Naive thymus-derived CD4-positive, alpha-beta T cell (primary cell): ENCODE measurements at regions of chr9 and their contacts with region 1.

Region 1: DNA sequence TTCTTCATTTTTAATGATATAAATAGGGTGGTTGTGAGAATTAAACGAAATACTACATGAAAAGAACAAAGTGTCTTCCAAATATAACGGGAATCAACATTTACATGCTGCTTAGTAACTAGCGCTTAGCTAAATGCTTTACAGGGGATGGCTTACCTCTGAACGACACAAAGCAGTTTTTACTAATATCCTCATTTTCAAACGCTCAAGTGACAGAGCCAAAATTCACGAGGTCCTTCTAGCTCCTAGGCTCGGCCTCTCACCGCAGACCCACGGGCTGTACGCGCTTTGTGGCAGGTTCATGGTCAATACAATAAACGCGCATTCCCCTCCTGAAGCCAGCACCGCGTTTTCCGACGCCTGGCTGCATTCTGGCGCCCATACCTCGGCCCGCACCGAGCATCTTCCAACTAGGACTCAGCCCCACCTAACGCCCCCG is 442 bp downstream of the ZNF510 start:
- DNase-seq: peak in 5 of 9 donors; percentile 18 to 47 (median 29)
- ATAC-seq: peak; percentile 28
- H3K4me3 ChIP-seq: peak overlapping the region; percentile 84
- H3K4me3 Mint-ChIP-seq: peak overlapping the region; percentile 91 to 100 (median 98)
- H3K27ac ChIP-seq: peak overlapping the region; percentile 92
- H3K27ac Mint-ChIP-seq: peak overlapping the region; percentile 94 to 100 (median 98)
- H3K4me1 ChIP-seq: peaks cover 6 to 12% of the 10 kb centered on the region in 2 donors
- H3K4me1 Mint-ChIP-seq: peaks cover 12 to 64% (median 58%) of the 10 kb centered on the region in 7 donors
- H3K27me3 ChIP-seq: no peaks in the 10 kb centered on the region
- H3K27me3 Mint-ChIP-seq: no peaks in the 10 kb centered on the region

Region 2: GRCh38 chr9:96686548-96687335 is 90.7 kb before region 1 on chr9:
- CTCF ChIA-PET with region 1: no interaction called
- POLR2A ChIA-PET with region 1: no interaction called
- intact Hi-C with region 1: loop called in 1 of 2 experiments (anchors 1 kb)
- DNase-seq: peak; percentile 54 to 81 (median 78)
- ATAC-seq: peak; percentile 96
- H3K4me3 ChIP-seq: peak overlapping the region; percentile 69
- H3K4me3 Mint-ChIP-seq: peak overlapping the region; percentile 73 to 95 (median 87)
- H3K27ac ChIP-seq: peak overlapping the region; percentile 67
- H3K27ac Mint-ChIP-seq: peak overlapping the region in 6 of 9 donors; percentile 42 to 81 (median 66)
- H3K4me1 ChIP-seq: no peaks in the 10 kb centered on the region
- H3K4me1 Mint-ChIP-seq: peaks cover 0 to 16% (median 7%) of the 10 kb centered on the region in 7 donors
- H3K27me3 ChIP-seq: no peaks in the 10 kb centered on the region
- H3K27me3 Mint-ChIP-seq: peaks cover 0 to 7% (median 6%) of the 10 kb centered on the region in 5 donors

Region 3: GRCh38 chr9:97038909-97039781 is 261.7 kb after region 1 on chr9 and contains the start of gene CTSV:
- CTCF ChIA-PET with region 1: no interaction called
- POLR2A ChIA-PET with region 1: no interaction called
- intact Hi-C with region 1: loop called in 1 of 2 experiments (anchors 10 kb)
- DNase-seq: peak; percentile 47 to 88 (median 60)
- ATAC-seq: peak; percentile 98
- H3K4me3 ChIP-seq: peak within 1 kb of the TSS; percentile 52
- H3K4me3 Mint-ChIP-seq: peak within 1 kb of the TSS; percentile 54 to 87 (median 79)
- H3K27ac ChIP-seq: no peak within 1 kb of the TSS
- H3K27ac Mint-ChIP-seq: peak within 1 kb of the TSS in 2 of 9 donors; percentile 49 to 84
- H3K4me1 ChIP-seq: no peaks in the 10 kb centered on the region
- H3K4me1 Mint-ChIP-seq: peaks cover 3 to 11% (median 9%) of the 10 kb centered on the region in 7 donors
- H3K27me3 ChIP-seq: no peaks in the 10 kb centered on the region
- H3K27me3 Mint-ChIP-seq: peaks cover 36 to 55% (median 47%) of the 10 kb centered on the region in 5 donors
- total RNA-seq, gene CTSV: 0.21 to 0.24 TPM in 2 of 5 experiments, not detected in the others

Region 4: DNA sequence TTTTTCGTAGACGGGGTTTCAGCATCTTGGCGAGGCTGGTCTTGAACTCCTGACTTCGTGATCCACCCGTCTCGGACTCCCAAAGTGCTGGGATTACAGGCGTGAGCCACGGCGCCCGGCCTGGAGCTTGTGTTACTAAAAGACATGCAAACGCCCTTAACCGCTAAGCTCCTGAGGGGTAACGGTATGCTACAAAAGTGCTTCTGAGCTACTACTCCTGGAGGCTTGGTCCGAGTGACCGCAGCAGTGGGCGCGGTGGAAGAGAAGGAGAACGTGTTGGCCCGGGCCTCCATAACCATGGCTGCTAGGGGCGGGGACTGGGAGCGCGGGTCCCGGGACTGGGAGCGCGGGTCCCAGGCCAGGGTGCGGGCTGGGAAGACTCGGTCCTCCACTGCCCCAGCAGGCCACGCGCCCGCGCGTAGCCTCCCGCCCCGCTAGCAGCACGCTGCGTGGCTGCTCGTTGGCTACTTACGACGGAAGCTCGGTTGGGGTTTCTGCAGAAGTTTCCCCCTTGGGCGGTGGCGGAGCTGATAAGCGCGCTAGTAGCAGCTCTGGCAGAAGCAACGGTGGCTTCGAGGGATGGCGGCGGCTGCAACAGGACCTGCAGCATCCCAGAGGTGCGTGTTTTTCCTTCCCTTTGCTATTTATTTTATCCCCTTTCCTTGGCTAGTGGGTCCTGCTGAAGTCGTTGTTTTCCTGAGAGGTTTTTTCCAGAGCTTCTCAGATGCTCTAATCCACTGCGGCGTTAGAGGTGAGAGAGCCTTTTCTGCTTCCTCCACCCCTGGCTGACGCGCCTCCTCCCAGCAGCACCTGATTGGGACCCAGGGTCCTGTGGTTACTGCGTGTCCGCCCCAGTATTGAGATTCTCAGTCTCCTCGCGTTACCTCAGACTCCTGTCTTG is 460.8 kb after region 1 on chr9:
- CTCF ChIA-PET with region 1: no interaction called
- POLR2A ChIA-PET with region 1: no interaction called
- intact Hi-C with region 1: loop called in 1 of 2 experiments (anchors 5 kb)
- DNase-seq: peak; percentile 48 to 82 (median 70)
- ATAC-seq: peak; percentile 94
- H3K4me3 ChIP-seq: peak overlapping the region; percentile 71
- H3K4me3 Mint-ChIP-seq: peak overlapping the region; percentile 87 to 98 (median 95)
- H3K27ac ChIP-seq: peak overlapping the region; percentile 63
- H3K27ac Mint-ChIP-seq: peak overlapping the region; percentile 84 to 94 (median 90)
- H3K4me1 ChIP-seq: peaks cover 0 to 5% of the 10 kb centered on the region in 2 donors
- H3K4me1 Mint-ChIP-seq: peaks cover 11 to 38% (median 24%) of the 10 kb centered on the region in 7 donors
- H3K27me3 ChIP-seq: no peaks in the 10 kb centered on the region
- H3K27me3 Mint-ChIP-seq: peaks cover 0 to 5% (median 0%) of the 10 kb centered on the region in 5 donors